Activated CD4-positive, alpha-beta T cell treated with anti-CD3 and anti-CD28 coated beads, Interleukin-2, amount 10 ng/mL, durations not matched to agents 24 days and 14 days (primary cell): ENCODE measurements at regions of chr6 and their contacts with region 1.

Region 1: DNA sequence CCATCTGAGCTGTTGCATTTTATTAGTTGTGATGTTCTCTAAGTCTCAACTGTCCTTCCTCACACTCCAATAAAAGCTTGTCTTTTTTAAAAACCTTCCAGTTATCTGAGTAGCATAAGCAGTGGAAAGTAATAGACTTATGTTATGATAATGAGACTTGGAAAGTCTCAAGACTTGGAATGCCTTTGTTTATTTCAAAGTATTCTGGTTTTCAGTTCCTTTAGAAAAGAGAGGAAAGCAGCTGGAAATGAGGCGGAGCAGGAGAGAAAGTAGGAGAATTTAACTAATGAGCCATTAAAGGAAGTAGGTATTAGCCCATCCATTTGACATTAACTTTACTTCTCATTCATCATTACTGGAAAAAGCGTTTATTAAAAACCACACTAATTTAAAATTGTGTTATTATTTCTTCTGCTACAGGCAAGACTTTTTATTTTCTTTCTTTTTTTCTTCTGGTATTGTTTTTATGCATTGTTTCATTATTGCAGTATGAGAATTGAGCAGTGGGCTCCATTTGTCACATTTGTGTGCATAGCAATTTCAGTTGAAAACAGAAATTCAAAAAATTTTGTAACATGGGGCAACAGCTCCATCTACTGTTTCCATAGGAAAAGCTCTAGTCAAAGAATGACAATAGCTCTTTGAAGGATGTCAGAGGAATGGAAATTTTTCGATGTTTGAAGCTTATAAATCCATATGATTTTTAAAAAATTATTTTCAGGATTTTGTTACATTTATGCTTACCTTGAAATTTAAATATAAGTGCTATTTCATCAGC is 194.8 kb downstream of the COL9A1 start:
- DNase-seq: peak; percentile 60
- H3K4me3 Mint-ChIP-seq: no peak overlapping the region
- H3K27ac Mint-ChIP-seq: no peak overlapping the region
- H3K4me1 Mint-ChIP-seq: no peaks in the 10 kb centered on the region
- H3K27me3 Mint-ChIP-seq: peaks cover 10% of the 10 kb centered on the region

Region 2: GRCh38 chr6:68634726-68635411 is 1473.2 kb before region 1 on chr6 and contains the start of gene ADGRB3:
- intact Hi-C with region 1: loop called (anchors 5 kb)
- DNase-seq: peak; percentile 79
- H3K4me3 Mint-ChIP-seq: peak within 1 kb of the TSS; percentile 85
- H3K27ac Mint-ChIP-seq: no peak within 1 kb of the TSS
- H3K4me1 Mint-ChIP-seq: peaks cover 14% of the 10 kb centered on the region
- H3K27me3 Mint-ChIP-seq: peaks cover 48% of the 10 kb centered on the region
- total RNA-seq, gene ADGRB3: not detected in 2 replicates

Region 3: DNA sequence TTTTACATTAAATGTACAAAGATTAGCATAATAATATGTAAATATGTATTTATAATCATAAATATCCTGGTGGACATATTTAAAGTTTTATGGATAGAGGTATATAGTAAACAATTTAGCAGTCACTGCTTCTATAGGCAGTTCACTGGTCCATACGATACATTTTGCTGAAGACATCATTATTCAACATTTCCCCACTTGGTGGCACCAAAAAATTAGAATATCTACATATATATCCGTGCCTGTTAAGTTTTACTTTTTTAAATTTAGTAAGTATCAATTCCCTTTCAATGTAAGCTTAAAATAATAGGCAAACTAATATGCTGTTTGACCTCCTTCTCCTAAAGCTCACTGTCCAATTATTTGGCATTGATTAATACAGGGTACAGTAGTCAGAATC is 375.4 kb before region 1 on chr6:
- intact Hi-C with region 1: loop called (anchors 5 kb)
- DNase-seq: no peak
- H3K4me3 Mint-ChIP-seq: no peak overlapping the region
- H3K27ac Mint-ChIP-seq: no peak overlapping the region
- H3K4me1 Mint-ChIP-seq: no peaks in the 10 kb centered on the region
- H3K27me3 Mint-ChIP-seq: no peaks in the 10 kb centered on the region

Region 4: GRCh38 chr6:69835414-69836179 is 272.4 kb before region 1 on chr6:
- intact Hi-C with region 1: loop called (anchors 10 kb)
- DNase-seq: peak; percentile 71
- H3K4me3 Mint-ChIP-seq: no peak overlapping the region
- H3K27ac Mint-ChIP-seq: no peak overlapping the region
- H3K4me1 Mint-ChIP-seq: peaks cover 2% of the 10 kb centered on the region
- H3K27me3 Mint-ChIP-seq: peaks cover 35% of the 10 kb centered on the region